Activated CD8-positive, alpha-beta memory T cell treated with anti-CD3 and anti-CD28 coated beads, Interleukin-2, amount 10 ng/mL, durations not matched to agents 7 days and 5 days (primary cell): ENCODE measurements at regions of chr1 and their contacts with region 1.

Region 1: DNA sequence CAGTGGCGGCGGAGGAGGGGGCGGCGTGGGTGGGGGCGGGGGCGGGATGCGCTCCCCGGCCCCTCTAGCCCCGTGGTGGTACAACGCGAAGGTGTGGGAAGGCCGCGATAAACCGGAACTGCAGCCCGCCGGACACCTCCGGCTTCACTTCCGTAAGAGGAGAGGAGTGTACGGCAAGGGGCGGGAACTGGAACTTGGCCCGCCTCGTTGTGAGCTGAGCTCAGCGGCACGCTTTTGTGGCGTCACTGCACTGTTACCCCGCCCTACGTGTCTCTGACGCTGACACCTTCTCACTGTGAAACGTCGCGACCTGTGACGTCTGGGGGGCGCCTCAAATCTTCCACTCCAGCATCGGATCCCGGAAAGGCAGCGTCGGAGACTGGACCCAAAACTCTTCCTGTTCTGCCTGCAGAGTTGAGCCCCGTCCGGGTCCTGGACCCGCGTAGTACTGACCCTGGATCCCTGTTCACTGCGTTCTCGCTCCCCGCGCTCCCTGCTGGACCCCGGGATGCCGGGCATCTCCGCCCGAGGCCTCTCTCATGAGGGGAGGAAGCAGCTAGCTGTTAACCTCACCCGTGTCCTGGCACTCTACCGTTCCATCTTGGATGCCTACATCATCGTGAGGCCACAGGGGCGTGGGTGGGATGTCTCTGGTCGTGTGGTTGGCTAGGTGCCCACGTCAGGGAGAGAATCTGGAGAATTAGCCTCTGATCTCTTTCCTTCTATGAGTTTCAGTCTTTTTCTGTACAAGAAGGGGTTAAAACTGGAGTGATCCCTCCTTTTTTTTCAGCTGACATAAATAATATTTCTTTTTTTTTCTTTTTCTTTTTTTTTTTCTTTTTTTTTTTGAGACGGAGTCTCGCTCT is at the start of gene ISG20L2:
- DNase-seq: peak; percentile 99
- ATAC-seq: peak; percentile 89
- H3K4me3 Mint-ChIP-seq: no peak within 1 kb of the TSS
- H3K27ac Mint-ChIP-seq: no peak within 1 kb of the TSS
- H3K4me1 Mint-ChIP-seq: peaks cover 29% of the 10 kb centered on the region
- H3K27me3 Mint-ChIP-seq: no peaks in the 10 kb centered on the region
- total RNA-seq, gene ISG20L2: 56.0 to 70.3 TPM

Region 2: GRCh38 chr1:156591432-156592157 is 137.2 kb before region 1 on chr1 and contains the start of gene NAXE:
- CTCF ChIA-PET with region 1: no interaction called
- DNase-seq: peak; percentile 77
- ATAC-seq: peak; percentile 98
- H3K4me3 Mint-ChIP-seq: peak within 1 kb of the TSS; percentile 83
- H3K27ac Mint-ChIP-seq: peak within 1 kb of the TSS; percentile 88
- H3K4me1 Mint-ChIP-seq: peaks cover 28% of the 10 kb centered on the region
- H3K27me3 Mint-ChIP-seq: no peaks in the 10 kb centered on the region
- total RNA-seq, gene NAXE: 62.7 to 66.6 TPM

Region 3: DNA sequence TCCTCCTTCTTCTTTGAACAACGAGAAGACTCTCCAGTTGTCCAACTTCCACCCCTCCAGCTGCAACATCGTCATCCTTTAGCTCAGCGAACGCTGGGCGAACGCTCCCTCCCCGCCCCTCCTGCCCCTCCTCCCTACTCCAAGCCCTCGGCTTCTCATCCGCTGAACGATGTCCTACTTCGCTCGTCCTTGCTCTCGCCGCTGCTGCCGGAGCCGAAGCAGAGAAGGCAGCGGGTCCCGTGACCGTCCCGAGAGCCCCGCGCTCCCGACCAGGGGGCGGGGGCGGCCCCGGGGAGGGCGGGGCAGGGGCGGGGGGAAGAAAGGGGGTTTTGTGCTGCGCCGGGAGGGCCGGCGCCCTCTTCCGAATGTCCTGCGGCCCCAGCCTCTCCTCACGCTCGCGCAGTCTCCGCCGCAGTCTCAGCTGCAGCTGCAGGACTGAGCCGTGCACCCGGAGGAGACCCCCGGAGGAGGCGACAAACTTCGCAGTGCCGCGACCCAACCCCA is 87.0 kb before region 1 on chr1 and contains the start of gene BCAN:
- CTCF ChIA-PET with region 1: interaction called, 18 read pairs
- DNase-seq: no peak
- ATAC-seq: no peak
- H3K4me3 Mint-ChIP-seq: no peak within 1 kb of the TSS
- H3K27ac Mint-ChIP-seq: no peak within 1 kb of the TSS
- H3K4me1 Mint-ChIP-seq: peaks cover 41% of the 10 kb centered on the region
- H3K27me3 Mint-ChIP-seq: peaks cover 90% of the 10 kb centered on the region
- total RNA-seq, gene BCAN: 0.07 TPM in 1 of 2 experiments, not detected in the other

Region 4: DNA sequence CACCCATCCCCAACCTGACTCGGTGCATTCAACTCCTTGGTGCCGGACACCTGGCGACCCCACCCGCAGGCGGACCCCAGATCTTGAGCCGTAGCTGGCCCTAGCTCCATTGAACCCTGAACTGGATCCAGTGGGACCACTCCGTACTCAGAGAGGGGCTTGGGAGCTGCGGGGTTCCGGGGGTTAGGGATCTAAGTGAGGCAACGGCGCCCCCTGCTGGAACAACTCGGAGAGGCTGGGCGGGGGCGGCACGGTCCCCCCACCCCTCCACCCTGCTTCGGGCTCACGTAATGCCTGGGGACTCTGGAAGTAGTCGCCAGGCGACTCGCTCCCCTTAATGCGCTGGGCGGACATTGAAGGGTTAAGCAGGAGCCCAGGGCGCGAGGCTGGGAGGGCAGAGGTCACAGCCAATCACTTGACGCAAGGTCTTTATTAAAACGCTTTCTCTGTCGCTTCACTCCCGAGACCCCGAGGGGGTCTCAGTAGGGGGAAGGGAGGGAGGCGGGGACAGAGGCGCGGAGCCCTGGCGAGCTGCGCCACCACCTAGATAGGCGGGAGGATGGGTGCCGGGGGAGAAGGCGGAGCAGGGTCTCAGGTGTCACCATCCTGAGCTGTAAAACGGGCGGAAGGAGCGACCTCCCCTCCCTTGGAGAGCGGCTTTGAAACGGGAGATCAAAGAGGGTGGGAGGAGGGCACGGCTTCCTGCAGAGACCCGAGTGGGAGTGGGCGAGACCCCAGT is 22.7 kb before region 1 on chr1:
- CTCF ChIA-PET with region 1: interaction called, 77 read pairs
- DNase-seq: peak; percentile 70
- ATAC-seq: peak; percentile 77
- H3K4me3 Mint-ChIP-seq: peak overlapping the region; percentile 56
- H3K27ac Mint-ChIP-seq: no peak overlapping the region
- H3K4me1 Mint-ChIP-seq: peaks cover 20% of the 10 kb centered on the region
- H3K27me3 Mint-ChIP-seq: peaks cover 43% of the 10 kb centered on the region

Region 5: DNA sequence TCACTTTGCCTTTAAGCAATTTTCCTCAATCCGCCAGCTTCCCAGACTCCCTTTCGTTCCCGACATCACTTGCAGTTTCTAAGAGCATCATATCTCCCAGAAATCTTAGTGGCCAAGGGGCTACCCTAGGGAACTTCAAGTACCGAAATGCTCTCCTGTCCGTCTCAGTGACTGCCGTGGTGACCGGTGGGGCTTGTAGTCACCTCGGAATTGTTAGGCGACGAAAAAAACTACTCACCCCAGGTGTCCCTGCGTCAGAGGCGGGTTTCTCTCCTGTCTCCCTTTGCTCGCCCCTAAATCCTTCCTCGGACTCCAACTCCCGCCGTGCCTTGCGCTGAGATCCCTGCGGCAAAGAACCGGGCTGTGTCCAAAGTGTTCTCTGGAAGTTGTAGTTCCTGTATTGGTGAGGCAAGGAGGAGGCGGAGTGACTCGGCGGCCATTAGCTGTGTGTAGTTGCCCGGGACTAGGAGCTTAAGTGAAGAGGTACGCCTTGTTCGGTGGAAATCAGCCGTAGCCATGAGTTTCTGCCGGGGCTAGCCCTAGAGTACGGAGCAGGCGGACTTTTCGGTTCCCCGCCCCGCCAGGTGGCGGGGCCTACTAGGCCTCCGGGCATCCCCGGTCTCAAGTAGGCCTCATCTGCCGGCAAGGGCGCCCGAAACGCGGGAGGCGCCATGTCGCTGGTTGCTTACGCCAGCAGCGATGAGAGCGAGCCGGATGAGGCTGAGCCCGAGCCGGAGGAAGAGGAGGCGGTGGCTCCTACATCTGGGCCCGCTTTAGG is 38.5 kb after region 1 on chr1 and contains the start of gene PRCC:
- CTCF ChIA-PET with region 1: interaction called, 116 read pairs
- DNase-seq: peak; percentile 100
- ATAC-seq: peak; percentile 95
- H3K4me3 Mint-ChIP-seq: no peak within 1 kb of the TSS
- H3K27ac Mint-ChIP-seq: no peak within 1 kb of the TSS
- H3K4me1 Mint-ChIP-seq: peaks cover 41% of the 10 kb centered on the region
- H3K27me3 Mint-ChIP-seq: no peaks in the 10 kb centered on the region
- total RNA-seq, gene PRCC: 68.7 to 99.8 TPM

Region 6: GRCh38 chr1:156813750-156814570 is 85.1 kb after region 1 on chr1:
- CTCF ChIA-PET with region 1: interaction called, 21 read pairs
- DNase-seq: peak; percentile 82
- ATAC-seq: peak; percentile 44
- H3K4me3 Mint-ChIP-seq: peak overlapping the region; percentile 95
- H3K27ac Mint-ChIP-seq: peak overlapping the region; percentile 100
- H3K4me1 Mint-ChIP-seq: peaks cover 71% of the 10 kb centered on the region
- H3K27me3 Mint-ChIP-seq: no peaks in the 10 kb centered on the region

Region 7: DNA sequence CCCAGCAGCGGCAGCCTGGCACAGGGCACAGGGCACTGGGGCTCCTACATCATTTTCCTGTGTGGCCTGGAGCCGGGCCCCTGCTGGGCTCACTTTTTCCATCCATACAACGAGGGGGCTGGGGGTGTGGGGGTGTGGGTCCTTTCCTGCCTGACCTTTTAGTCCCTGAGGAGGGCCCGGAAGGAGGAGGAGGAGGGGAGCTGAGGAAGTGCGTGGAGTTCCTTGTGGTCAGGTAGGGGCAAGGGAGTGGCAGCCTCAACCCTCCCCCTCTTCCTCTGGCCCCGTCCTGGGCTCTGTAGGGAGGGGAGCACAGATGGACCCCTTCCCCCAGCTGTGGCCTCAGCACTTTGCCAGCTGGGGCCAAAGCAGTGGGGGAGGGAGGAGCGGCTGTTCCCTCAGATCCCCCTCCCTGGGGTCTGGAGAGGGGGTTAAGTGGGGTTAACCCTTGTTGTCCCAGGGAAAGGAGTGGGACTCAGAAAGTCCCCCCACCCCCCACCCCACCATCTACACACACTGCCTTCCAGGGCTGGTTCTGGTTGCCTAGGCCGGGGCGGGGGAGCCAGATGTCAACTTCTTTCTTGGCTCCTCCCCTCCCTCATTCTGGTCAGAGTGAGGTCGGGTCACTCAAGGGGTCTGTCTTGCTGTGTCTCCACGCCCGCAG is 137.5 kb after region 1 on chr1:
- CTCF ChIA-PET with region 1: interaction called, 146 read pairs
- DNase-seq: no peak
- ATAC-seq: peak; percentile 32
- H3K4me3 Mint-ChIP-seq: no peak overlapping the region
- H3K27ac Mint-ChIP-seq: peak overlapping the region; percentile 34
- H3K4me1 Mint-ChIP-seq: peaks cover 54% of the 10 kb centered on the region
- H3K27me3 Mint-ChIP-seq: peaks cover 19% of the 10 kb centered on the region

Region 8: DNA sequence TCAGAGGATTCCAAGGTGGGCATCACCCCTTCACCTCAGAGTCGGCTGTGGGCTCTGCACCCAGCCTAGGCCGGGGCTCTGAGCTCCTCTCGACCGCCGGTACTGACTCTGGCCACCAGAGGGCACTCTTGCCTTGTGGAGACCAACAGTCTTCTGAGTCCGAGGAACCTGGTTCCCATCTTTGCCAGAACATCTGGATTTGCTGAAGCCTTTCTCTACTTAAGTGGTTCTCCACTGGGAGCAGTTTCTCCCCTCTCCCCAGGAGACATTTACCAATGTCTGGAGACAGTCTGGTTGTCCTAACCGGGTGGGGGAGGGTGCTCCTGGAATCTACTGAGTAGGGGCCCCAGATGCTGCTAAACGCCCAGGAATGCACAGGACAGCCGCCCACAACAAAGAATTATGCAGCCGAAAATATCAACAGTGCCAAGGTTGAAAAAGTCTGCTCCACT is 361.4 kb after region 1 on chr1:
- CTCF ChIA-PET with region 1: no interaction called
- DNase-seq: peak; percentile 89
- ATAC-seq: peak; percentile 87
- H3K4me3 Mint-ChIP-seq: no peak overlapping the region
- H3K27ac Mint-ChIP-seq: no peak overlapping the region
- H3K4me1 Mint-ChIP-seq: no peaks in the 10 kb centered on the region
- H3K27me3 Mint-ChIP-seq: peaks cover 2% of the 10 kb centered on the region